ENCODE measurements at regions of chrX and their contacts with region 1.

Region 1: GRCh38 chrX:132615391-132616131 is 126.7 kb upstream of the MBNL3 start:
- DNase-seq: peak; percentile 9 to 63
- H3K4me3 ChIP-seq: no peak overlapping the region
- H3K27ac ChIP-seq: no peak overlapping the region
- H3K4me1 ChIP-seq: no peaks in the 10 kb centered on the region
- H3K27me3 ChIP-seq: no peaks in the 10 kb centered on the region
- CTCF ChIP-seq: peak; percentile 54 to 63 (median 58)
- EP300 ChIP-seq: no peak
- POLR2A ChIP-seq: no peak
- RAD21 ChIP-seq: peak; percentile 56 to 63

Region 2: GRCh38 chrX:132226169-132226568 is 389.4 kb before region 1 on chrX:
- CTCF ChIA-PET with region 1: interaction called, 19 read pairs
- POLR2A ChIA-PET with region 1: no interaction called
- DNase-seq: no peak
- H3K4me3 ChIP-seq: no peak overlapping the region
- H3K27ac ChIP-seq: no peak overlapping the region
- H3K4me1 ChIP-seq: no peaks in the 10 kb centered on the region
- H3K27me3 ChIP-seq: no peaks in the 10 kb centered on the region
- CTCF ChIP-seq: peak in 1 of 3 experiments; percentile 18; a peak in 1 of 4 replicates
- EP300 ChIP-seq: no peak
- POLR2A ChIP-seq: no peak
- RAD21 ChIP-seq: peak; percentile 30 to 53; a peak in 3 of 4 replicates

Region 3: GRCh38 chrX:132292793-132293192 is 322.8 kb before region 1 on chrX:
- CTCF ChIA-PET with region 1: interaction called, 25 read pairs
- POLR2A ChIA-PET with region 1: no interaction called
- DNase-seq: no peak
- H3K4me3 ChIP-seq: no peak overlapping the region
- H3K27ac ChIP-seq: no peak overlapping the region
- H3K4me1 ChIP-seq: no peaks in the 10 kb centered on the region
- H3K27me3 ChIP-seq: no peaks in the 10 kb centered on the region
- CTCF ChIP-seq: peak in 2 of 3 experiments; percentile 44 to 51; a peak in 3 of 4 replicates
- EP300 ChIP-seq: no peak
- POLR2A ChIP-seq: no peak
- RAD21 ChIP-seq: peak; percentile 67 to 73

Region 4: GRCh38 chrX:132602701-132603100 is 12.9 kb before region 1 on chrX:
- CTCF ChIA-PET with region 1: interaction called, 33 read pairs
- POLR2A ChIA-PET with region 1: no interaction called
- DNase-seq: no peak
- H3K4me3 ChIP-seq: no peak overlapping the region
- H3K27ac ChIP-seq: no peak overlapping the region
- H3K4me1 ChIP-seq: no peaks in the 10 kb centered on the region
- H3K27me3 ChIP-seq: no peaks in the 10 kb centered on the region
- CTCF ChIP-seq: no peak
- EP300 ChIP-seq: no peak
- POLR2A ChIP-seq: no peak
- RAD21 ChIP-seq: no peak